Pancreas (tissue), 10 donors: ENCODE measurements at regions of chr17 and their contacts with region 1.

Region 1: GRCh38 chr17:73092523-73093135 is at the start of gene SLC39A11:
- DNase-seq: peak; percentile 93 to 97 (median 93)
- ATAC-seq: peak; percentile 98 to 99 (median 98)
- H3K4me3 ChIP-seq: peak within 1 kb of the TSS; percentile 23 to 68 (median 64)
- H3K27ac ChIP-seq: peak within 1 kb of the TSS in 3 of 4 donors; percentile 25 to 57 (median 33)
- H3K4me1 ChIP-seq: peaks cover 0 to 20% (median 6%) of the 10 kb centered on the region in 3 donors
- H3K27me3 ChIP-seq: no peaks in the 10 kb centered on the region
- CTCF ChIP-seq: no peak
- total RNA-seq, gene SLC39A11: 16.7 to 32.9 (median 21.1) TPM

Region 2: DNA sequence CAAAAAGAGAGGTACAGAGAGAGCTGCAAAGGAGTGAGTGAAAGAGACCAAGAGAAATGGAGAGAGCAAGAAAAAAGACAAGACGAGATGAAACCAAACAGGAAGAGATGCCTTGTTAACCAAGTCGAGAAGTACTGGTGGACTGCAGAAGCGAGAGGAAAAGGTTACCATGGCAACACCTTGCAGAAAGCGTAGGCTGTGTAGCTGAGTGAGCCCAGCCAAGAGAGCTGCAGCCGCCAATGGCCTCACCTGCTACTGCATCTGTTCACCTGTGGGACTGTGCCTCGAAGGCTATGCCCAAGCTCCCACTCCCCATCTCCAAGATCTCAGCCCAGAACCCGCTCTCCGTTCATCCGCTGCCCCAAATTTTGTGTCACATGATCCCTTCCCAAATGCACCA is 161.5 kb before region 1 on chr17:
- intact Hi-C with region 1: no loop called
- DNase-seq: no peak
- ATAC-seq: peak in 3 of 4 donors; percentile 26 to 86 (median 71)
- H3K4me3 ChIP-seq: no peak overlapping the region
- H3K27ac ChIP-seq: no peak overlapping the region
- H3K4me1 ChIP-seq: no peaks in the 10 kb centered on the region
- H3K27me3 ChIP-seq: no peaks in the 10 kb centered on the region
- CTCF ChIP-seq: no peak

Region 3: GRCh38 chr17:73007407-73007806 is 85.2 kb before region 1 on chr17:
- intact Hi-C with region 1: loop called in 1 of 3 experiments (anchors 10 kb)
- DNase-seq: peak in 3 of 6 donors; percentile 55 to 59 (median 57)
- ATAC-seq: peak; percentile 65 to 89 (median 74)
- H3K4me3 ChIP-seq: no peak overlapping the region
- H3K27ac ChIP-seq: peak overlapping the region in 1 of 4 donors; percentile 8
- H3K4me1 ChIP-seq: no peaks in the 10 kb centered on the region
- H3K27me3 ChIP-seq: no peaks in the 10 kb centered on the region
- CTCF ChIP-seq: no peak